ENCODE measurements at regions of chr10 and their contacts with region 1.

Region 1: DNA sequence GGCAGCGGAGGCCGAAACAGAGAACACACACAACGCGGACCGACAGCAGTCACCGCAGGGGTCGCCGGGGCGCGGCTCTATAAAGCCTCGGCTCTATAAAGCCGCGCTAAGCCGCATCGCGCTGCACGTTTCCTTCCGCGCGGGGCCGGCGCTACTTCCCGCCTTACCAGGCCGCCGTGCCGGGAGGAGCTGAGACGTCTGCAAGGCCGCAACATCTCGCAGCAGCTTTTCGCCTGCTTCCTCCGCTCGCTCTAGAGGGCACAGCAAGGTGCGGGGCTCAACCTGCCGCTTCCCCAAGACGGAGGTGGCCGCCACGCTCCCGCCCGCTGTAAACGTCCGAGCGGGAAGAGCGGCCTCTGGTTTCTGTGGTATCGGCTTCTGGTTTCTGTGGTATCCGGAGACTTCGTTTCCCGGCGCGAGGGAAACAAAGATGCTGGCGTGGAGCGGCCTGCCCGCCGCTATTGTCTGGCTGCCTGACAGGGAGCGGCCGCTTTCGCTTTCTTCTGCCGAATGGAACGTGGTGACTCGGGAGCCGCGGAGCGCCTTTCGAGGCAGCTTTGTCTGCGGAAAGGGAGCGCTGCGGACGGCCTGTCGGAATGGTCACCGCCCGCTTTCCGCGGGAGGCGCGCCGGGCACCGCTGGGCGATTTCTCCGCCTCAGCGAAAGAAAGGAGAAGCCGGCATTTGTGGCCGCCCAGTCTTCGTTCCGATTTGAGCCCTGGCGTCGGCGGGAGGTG is 91.8 kb downstream of the SPAG6 start:
- DNase-seq: peak; percentile 97
- ATAC-seq: peak; percentile 97

Region 2: GRCh38 chr10:22251751-22252223 is 185.3 kb before region 1 on chr10:
- intact Hi-C with region 1: loop called (anchors 5 kb)
- DNase-seq: peak; percentile 88
- ATAC-seq: peak; percentile 71

Region 3: GRCh38 chr10:22340362-22341189 is 96.5 kb before region 1 on chr10:
- intact Hi-C with region 1: loop called (anchors 5 kb)
- DNase-seq: peak; percentile 84
- ATAC-seq: peak; percentile 83

Region 4: GRCh38 chr10:22849077-22849805 is 412.2 kb after region 1 on chr10:
- intact Hi-C with region 1: loop called (anchors 5 kb)
- DNase-seq: peak; percentile 91
- ATAC-seq: peak; percentile 98